ENCODE measurements at regions of chr17 and their contacts with region 1.

Region 1: GRCh38 chr17:68613739-68614298 is 12.7 kb upstream of the FAM20A start:
- H3K4me3 ChIP-seq: no peak overlapping the region
- H3K27ac ChIP-seq: no peak overlapping the region
- H3K4me1 ChIP-seq: no peaks in the 10 kb centered on the region
- CTCF ChIP-seq: 0 out of 2 replicates have a peak, but pooled peaks have one; percentile 14

Region 2: DNA sequence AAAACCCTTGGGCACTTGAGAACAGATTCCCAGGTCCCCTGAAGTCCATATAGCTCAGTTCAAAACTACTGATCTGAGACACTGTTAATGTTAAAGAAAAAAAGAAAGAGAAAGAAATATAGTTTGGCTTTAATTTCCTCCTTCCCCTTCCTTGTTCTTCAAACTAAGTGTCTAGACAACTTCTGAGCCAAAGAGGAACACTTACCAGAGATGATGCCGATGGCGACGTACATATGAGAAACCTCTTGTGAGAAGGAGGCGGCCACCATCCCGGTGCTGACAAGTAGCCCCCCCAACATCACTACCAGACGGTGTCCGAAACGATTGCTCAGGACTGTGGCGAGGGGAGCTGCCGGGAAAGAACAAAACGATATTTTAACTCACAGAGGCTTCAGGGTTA is 340.1 kb before region 1 on chr17:
- CTCF ChIA-PET with region 1: no interaction called
- POLR2A ChIA-PET with region 1: no interaction called
- H3K4me3 ChIP-seq: no peak overlapping the region
- H3K27ac ChIP-seq: no peak overlapping the region
- H3K4me1 ChIP-seq: no peaks in the 10 kb centered on the region
- CTCF ChIP-seq: no peak

Region 3: GRCh38 chr17:68468334-68468733 is 145.5 kb before region 1 on chr17:
- CTCF ChIA-PET with region 1: interaction called, 15 read pairs
- POLR2A ChIA-PET with region 1: no interaction called
- H3K4me3 ChIP-seq: no peak overlapping the region
- H3K27ac ChIP-seq: no peak overlapping the region
- H3K4me1 ChIP-seq: no peaks in the 10 kb centered on the region
- CTCF ChIP-seq: no peak

Region 4: DNA sequence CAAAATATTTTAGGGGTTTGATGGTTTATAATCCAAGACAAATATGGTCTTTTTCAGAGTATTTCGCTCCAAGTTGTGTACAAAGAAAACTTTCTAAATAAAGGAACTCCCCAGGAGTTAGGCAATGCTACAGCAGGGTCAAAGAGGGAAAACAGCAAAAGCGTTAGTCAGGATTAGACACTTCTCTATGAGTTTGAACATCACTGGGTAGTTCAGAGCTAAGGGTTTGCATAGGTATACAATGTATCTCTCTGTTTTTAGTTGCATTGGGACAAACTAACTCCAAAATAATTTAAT is 47.4 kb before region 1 on chr17:
- CTCF ChIA-PET with region 1: interaction called, 11 read pairs
- POLR2A ChIA-PET with region 1: no interaction called
- H3K4me3 ChIP-seq: no peak overlapping the region
- H3K27ac ChIP-seq: no peak overlapping the region
- H3K4me1 ChIP-seq: no peaks in the 10 kb centered on the region
- CTCF ChIP-seq: no peak

Region 5: GRCh38 chr17:68600067-68600930 is 13.5 kb before region 1 on chr17:
- CTCF ChIA-PET with region 1: interaction called, 15 read pairs
- POLR2A ChIA-PET with region 1: no interaction called
- H3K4me3 ChIP-seq: peak overlapping the region; percentile 44
- H3K27ac ChIP-seq: peak overlapping the region; percentile 46; the same call in 1 of the 2 replicates
- H3K4me1 ChIP-seq: peaks cover 9% of the 10 kb centered on the region
- CTCF ChIP-seq: peak; percentile 75; the same call in 1 of the 2 replicates

Region 6: DNA sequence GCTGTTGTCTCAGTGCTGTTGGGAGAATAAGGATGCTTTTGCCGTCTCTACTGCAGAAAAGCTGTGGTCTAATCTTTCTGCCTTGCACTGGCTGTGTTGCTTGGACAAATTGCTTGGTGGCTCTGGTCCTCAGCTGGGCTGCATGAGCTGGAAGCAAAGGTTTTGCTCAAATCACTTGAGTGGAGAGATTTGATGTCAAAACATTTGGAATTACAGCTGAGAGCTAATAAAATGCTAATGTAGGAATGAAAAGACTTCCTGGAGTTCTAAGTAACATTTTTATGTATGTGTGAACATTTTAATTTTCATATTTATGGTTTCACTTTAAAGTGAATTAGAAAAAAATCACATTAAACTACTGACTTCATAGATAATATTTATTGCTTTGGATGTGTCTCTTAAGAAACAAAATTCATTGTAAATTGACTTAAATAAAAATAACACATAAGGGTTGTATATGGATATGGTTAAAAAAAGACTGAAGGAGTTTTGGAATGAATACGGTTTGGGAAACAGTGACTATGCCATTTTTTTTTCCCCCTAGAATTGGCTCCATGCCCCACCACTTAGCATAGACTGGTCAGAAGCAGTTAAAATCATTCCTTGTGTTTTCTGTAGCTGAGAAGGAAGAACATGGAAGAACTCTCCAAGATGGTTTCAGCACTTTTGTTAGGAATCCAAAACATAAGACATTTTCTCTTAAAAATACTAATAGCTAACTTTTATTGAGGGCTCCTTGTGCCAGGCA is 26.6 kb after region 1 on chr17:
- CTCF ChIA-PET with region 1: interaction called, 11 read pairs
- POLR2A ChIA-PET with region 1: no interaction called
- H3K4me3 ChIP-seq: no peak overlapping the region
- H3K27ac ChIP-seq: no peak overlapping the region
- H3K4me1 ChIP-seq: no peaks in the 10 kb centered on the region
- CTCF ChIP-seq: no peak